ENCODE measurements at regions of chr1 and their contacts with region 1.

Region 1: DNA sequence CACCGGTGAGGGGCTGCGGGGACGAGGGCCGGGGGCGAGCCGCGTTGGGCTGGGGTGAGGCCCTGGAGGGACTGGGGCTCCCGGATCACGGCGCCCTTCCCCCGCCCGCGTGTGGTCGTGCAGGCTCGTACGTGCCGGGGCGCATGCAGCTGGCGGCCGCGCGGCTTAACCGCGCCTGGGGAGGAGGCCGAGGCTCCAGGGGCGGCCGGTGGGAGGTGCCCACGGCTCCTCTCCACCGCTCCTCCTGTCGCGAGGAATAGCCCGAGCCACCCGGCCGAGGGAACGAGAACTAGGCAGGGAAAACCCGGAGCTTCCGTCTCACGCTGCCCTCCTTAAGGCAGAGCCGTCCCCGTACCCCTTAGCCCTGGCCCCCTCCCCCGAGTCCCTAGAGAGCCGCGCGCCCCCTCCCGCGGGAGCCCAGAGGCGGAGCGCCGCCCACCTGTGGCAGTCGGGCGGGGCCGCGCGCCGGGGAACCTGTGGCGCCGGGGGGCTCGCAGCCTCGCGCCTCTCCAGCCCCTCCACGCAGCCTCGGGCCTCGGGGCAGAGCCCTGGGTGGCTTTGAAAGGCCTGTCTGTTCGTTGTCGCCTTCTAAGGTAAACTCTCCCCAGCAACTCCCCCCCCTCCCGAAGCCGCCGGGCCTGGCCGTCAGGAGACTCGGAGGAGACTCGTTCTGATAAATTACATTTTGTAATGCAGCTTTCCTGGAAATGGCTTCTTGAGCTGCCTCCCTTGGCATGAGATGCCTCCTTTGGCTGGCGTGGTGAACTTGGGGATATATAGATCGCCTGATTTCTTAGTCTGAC is 746 bp downstream of the AK4 start:
- DNase-seq: peak in 1 of 2 donors; percentile 71
- H3K4me3 ChIP-seq: peak overlapping the region; percentile 81 to 89
- H3K27ac ChIP-seq: peak overlapping the region; percentile 92 to 93
- H3K4me1 ChIP-seq: peaks cover 0 to 3% of the 10 kb centered on the region in 2 donors
- H3K27me3 ChIP-seq: no peaks in the 10 kb centered on the region
- CTCF ChIP-seq: no peak

Region 2: DNA sequence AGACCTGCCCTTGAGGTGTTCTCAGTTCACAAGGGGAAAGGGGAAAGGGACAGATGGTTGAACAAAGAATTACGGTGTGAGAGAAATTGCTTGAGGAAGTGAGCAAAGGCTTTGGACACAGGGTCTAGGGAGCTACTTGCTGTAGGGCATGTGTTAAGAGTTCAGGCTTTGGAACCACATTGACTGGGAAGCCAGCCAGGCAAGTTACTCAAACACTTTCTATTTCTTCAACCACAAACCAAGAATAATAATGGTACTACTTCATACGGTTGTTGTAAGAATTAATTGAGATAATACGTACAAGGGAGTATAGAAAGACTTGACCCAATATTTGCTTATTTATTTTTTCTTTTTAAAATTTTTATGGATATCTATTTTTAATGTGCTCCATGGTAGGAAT is 25.8 kb after region 1 on chr1:
- intact Hi-C with region 1: loop called (anchors 2 kb)
- DNase-seq: peak in 1 of 2 donors; percentile 85
- H3K4me3 ChIP-seq: no peak overlapping the region
- H3K27ac ChIP-seq: no peak overlapping the region
- H3K4me1 ChIP-seq: peaks cover 0 to 38% of the 10 kb centered on the region in 2 donors
- H3K27me3 ChIP-seq: no peaks in the 10 kb centered on the region
- CTCF ChIP-seq: no peak